ENCODE measurements at regions of chr12 and their contacts with region 1.

Region 1: GRCh38 chr12:111812881-111813741 is 28.9 kb upstream of the MAPKAPK5 start:
- DNase-seq: peak; percentile 40
- H3K4me3 ChIP-seq: no peak overlapping the region
- CTCF ChIP-seq: peak; percentile 85

Region 2: DNA sequence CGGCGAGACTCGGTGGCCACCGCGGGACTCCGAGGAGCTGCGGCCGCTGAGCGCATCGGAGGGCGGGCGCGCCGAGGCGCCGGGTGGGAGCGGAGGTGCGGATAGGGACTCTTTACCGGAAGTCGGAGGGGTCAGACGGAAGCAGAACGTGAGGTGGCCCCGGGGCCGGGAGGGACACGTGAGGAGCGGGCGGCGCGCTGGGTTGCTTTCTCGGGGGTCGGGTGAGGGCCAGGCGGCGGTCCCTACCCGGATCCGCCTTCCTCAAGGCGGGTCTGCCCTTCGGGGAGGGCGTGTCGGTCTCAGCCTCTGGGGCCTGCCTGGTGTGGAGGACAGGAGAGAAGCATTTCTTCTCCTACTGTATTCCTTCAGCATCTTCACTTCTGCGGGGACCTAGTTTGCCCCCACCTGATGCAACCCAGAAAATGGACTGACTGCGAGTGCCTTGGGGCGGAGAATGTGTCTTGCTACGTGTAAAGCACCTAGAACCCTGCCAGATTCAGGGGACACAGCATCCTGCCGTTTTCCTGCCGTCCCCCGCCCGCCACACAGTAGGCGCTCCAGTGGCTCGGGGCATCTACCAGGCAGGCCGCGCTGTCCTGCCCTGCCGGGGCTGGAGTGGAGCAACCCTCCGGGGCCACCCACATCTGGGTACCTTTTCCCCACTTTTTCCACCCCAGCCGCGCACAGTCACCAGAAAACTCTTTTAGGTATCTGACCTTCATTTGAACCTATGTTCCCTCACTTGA is 213.5 kb before region 1 on chr12:
- CTCF ChIA-PET with region 1: no interaction called
- POLR2A ChIA-PET with region 1: no interaction called
- DNase-seq: peak; percentile 62
- H3K4me3 ChIP-seq: peak overlapping the region; percentile 78
- CTCF ChIP-seq: no peak

Region 3: GRCh38 chr12:111745211-111745610 is 67.9 kb before region 1 on chr12:
- CTCF ChIA-PET with region 1: interaction called, 209 read pairs
- POLR2A ChIA-PET with region 1: no interaction called
- DNase-seq: no peak
- H3K4me3 ChIP-seq: no peak overlapping the region
- CTCF ChIP-seq: no peak

Region 4: GRCh38 chr12:111753144-111753881 is 59.8 kb before region 1 on chr12:
- CTCF ChIA-PET with region 1: interaction called, 209 read pairs
- POLR2A ChIA-PET with region 1: no interaction called
- DNase-seq: no peak
- H3K4me3 ChIP-seq: no peak overlapping the region
- CTCF ChIP-seq: peak; percentile 84

Region 5: DNA sequence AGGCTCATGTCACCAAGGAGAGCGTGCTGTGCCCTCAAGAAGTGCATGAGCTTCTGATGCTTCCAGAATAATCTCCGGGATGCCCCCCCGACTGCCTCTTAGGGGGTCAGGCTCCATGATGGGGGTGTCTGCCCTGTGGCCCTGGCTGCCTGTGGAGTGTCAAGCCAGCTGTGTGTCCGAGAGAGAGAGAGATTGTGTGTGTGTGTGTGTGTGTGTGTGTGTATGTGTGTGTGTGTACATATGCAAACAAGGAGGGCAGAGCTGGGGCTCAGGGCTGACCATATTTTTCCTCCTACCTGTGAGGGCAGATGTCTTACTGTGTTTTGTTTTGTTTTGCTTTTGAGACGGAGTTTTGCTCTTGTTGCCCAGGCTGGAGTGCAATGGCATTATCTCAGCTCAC is 52.0 kb before region 1 on chr12:
- CTCF ChIA-PET with region 1: interaction called, 209 read pairs
- POLR2A ChIA-PET with region 1: no interaction called
- DNase-seq: no peak
- H3K4me3 ChIP-seq: no peak overlapping the region
- CTCF ChIP-seq: no peak

Region 6: DNA sequence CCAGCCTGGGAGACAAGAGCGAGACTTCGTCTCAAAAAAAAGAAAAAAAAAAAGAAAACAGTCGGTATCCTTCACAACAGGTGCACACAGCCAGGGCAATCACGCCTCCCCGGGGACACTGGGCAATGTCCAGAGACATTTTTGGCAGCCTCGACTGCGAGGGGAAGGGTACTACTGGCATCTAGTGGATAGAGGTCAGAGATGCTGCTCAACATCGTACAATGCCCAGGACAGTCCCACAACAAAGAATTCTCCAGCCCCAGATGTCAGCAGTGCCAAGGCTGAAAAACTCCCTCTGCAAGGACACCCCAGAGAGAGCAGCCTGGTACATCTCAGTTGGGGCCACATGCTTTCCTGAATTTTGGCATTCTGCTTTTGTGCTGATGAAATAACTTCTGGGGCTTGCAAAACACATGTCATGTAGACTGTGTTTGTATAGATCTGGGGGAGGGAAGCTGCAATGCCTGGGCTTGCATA is 24.9 kb before region 1 on chr12:
- CTCF ChIA-PET with region 1: interaction called, 36 read pairs
- POLR2A ChIA-PET with region 1: no interaction called
- DNase-seq: no peak
- H3K4me3 ChIP-seq: no peak overlapping the region
- CTCF ChIP-seq: peak; percentile 21

Region 7: DNA sequence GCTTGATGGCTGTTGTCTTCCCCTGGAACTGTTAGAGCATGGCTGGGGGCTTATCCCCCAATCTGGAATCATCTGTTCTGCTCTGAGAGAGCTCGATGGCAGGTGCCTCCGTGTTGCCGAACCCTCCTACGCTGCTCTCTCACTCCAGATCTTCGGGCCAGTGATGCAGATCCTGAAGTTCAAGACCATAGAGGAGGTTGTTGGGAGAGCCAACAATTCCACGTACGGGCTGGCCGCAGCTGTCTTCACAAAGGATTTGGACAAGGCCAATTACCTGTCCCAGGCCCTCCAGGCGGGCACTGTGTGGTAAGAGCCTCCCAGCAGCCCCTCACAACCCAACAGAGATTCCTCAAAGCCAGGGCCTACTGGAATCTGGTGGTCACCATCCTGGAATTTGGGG is 13.4 kb before region 1 on chr12:
- CTCF ChIA-PET with region 1: interaction called, 32 read pairs
- POLR2A ChIA-PET with region 1: no interaction called
- DNase-seq: no peak
- H3K4me3 ChIP-seq: no peak overlapping the region
- CTCF ChIP-seq: no peak

Region 8: DNA sequence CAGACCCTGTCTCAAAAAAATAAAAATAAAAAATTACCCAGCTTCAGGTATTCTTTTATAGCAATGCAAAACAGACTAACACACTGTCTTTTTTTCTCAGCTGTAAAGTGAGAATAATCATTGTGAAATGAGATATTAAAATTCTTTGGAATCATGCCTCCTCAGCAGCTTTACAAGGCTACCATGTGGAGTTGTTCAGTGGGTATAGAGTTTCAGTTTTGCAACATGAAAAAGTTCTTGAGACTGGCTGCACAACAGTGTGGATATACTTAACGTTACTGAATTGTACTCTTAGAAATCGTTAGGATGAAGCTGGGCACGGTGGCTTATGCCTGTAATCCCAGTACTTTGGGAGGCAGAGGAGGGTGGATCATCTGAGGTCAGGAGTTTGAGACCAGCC is 13.2 kb after region 1 on chr12:
- CTCF ChIA-PET with region 1: interaction called, 22 read pairs
- POLR2A ChIA-PET with region 1: no interaction called
- DNase-seq: no peak
- H3K4me3 ChIP-seq: no peak overlapping the region
- CTCF ChIP-seq: no peak

Region 9: GRCh38 chr12:111925171-111925570 is 112.1 kb after region 1 on chr12:
- CTCF ChIA-PET with region 1: no interaction called
- POLR2A ChIA-PET with region 1: no interaction called
- DNase-seq: no peak
- H3K4me3 ChIP-seq: no peak overlapping the region
- CTCF ChIP-seq: no peak